Breast epithelium (tissue), 4 donors: ENCODE measurements at regions of chr12 and their contacts with region 1.

Region 1: DNA sequence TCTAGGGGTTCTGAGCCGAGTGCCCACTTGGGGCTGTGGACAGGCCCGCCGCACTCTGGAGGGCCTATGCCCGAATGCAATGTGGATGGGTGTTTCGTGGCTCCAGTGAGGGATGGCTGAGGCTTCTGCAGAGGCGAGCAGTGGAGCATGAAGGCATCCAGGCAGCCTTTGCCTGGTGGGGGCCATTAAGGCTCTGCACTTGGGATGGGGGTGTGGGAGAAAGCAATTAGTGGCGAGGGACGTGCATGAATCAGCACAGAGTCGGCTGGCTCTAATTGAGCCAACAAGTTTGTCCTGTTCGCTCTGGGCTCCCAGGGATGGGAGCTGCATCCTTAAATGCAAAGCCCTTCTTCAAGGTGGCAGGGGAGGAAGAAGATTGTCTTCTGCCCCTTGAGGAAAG is 346.9 kb upstream of the FKBP4 start:
- DNase-seq: no peak
- H3K4me3 ChIP-seq: no peak overlapping the region
- H3K27ac ChIP-seq: no peak overlapping the region
- H3K4me1 ChIP-seq: no peaks in the 10 kb centered on the region
- H3K27me3 ChIP-seq: no peaks in the 10 kb centered on the region
- CTCF ChIP-seq: no peak
- POLR2A ChIP-seq: no peak

Region 2: DNA sequence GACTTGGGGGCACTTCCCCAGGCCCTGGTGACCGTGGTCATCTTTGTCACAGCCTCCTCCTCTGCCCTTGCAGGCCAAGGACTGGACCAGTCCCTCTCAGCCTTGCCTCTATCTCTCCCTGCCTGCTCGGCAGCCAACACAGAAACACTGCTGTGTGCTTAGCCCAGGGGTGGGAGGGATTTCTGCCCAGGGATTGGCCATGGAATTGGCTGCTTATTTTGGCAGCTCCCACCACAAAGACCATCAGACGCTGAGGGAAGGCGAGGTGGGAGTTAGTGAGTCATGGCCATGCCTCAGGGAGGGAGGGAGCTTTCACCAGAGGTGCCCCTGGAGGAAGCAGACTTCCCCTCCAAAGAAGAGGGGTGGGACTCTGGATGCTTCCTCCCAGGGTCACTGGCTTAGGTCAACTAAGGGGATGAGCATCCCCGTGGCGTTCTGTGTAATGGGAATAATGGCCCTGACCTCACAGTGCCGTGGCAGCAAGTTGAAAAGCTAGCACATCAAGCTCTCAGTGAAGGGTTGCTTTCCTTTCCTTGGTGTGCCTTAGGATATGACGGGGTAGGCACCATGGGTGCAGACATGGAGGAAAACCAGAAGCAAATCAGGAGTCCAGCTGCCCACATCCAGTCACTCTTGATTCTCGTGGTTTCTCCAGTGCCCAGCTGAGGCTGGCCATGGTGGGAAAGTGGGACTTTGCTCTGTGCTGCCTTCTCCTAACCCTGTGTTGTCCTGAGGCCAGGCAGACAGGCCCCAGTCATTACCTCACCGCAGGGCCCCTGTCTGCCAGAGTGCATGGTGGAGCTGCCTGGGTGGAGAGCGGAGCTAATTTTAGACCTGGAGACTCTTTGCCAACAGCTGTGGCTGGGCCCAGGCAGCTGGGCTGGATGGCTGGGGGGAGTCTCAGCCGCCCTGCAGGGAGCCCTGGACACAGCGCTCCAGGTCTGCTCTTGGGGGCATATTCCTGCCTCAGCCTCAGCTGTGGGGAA is 1966.7 kb before region 1 on chr12:
- intact Hi-C with region 1: loop called (anchors 5 kb)
- DNase-seq: no peak
- H3K4me3 ChIP-seq: no peak overlapping the region
- H3K27ac ChIP-seq: no peak overlapping the region
- H3K4me1 ChIP-seq: no peaks in the 10 kb centered on the region
- H3K27me3 ChIP-seq: no peaks in the 10 kb centered on the region
- CTCF ChIP-seq: no peak
- POLR2A ChIP-seq: no peak

Region 3: DNA sequence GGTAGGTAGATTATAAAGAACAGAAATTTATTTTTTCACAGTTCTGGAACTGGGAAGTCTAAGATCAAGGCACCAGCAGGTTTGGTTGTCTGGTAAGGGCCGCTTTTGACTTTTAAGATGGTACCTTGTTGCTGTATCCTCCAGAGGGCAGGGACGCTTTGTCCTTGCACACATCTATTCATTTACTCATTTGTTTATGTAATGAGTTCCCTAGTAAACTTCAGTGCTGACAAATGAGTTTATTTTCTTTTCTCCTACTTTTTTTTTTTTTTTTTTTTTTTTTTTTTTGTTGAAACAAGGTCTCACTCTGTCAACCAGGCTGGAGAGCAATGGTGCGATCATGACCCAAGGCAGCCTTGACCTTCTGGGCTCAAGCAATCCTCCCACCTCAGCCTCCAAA is 1049.2 kb before region 1 on chr12:
- intact Hi-C with region 1: no loop called
- DNase-seq: no peak
- H3K4me3 ChIP-seq: no peak overlapping the region
- H3K27ac ChIP-seq: no peak overlapping the region
- H3K4me1 ChIP-seq: no peaks in the 10 kb centered on the region
- H3K27me3 ChIP-seq: no peaks in the 10 kb centered on the region
- CTCF ChIP-seq: no peak
- POLR2A ChIP-seq: no peak

Region 4: DNA sequence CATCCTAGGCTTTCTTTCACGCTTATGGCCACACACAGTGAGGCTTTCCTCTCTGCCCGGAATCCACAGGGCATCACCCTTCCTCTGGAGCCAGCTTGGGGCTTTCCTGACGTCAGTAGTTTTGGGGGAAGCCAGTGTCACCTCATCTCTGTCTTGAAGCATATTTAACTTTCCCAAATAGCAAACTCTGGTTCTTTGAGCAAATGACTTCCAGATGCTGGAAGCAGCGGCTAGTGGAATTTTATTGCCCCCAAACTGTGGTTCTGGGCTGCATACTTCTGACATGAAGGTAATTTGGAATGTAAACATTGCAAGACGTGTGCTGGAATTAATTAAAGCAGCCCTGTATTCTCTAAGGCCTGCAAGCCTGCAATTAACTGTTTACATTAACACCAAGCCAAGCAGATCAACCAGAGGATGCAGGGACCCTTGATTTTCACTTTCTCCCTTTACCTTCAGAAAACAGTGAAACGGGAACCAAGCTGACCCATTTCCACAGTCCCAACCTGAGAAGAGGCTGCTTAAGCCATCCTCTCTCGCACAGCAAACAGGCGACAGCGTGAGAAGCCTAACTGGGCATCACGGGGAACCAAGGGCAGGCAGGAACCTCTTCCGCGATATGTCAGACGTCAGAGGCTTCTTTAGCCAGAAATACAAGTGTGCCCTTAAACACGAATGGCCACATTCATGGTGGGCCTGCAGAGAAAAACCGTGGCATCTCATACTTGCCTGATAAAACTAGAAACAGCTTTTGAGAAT is 136.7 kb before region 1 on chr12:
- intact Hi-C with region 1: no loop called
- DNase-seq: no peak
- H3K4me3 ChIP-seq: no peak overlapping the region
- H3K27ac ChIP-seq: peak overlapping the region in 1 of 2 donors; percentile 12
- H3K4me1 ChIP-seq: no peaks in the 10 kb centered on the region
- H3K27me3 ChIP-seq: no peaks in the 10 kb centered on the region
- CTCF ChIP-seq: no peak
- POLR2A ChIP-seq: no peak